Ascending aorta (tissue), 2 donors: ENCODE measurements at regions of chr4 and their contacts with region 1.

Region 1: GRCh38 chr4:184460499-184461285 is 13.7 kb downstream of the IRF2 start:
- DNase-seq: no peak
- H3K4me3 ChIP-seq: no peak overlapping the region
- H3K27ac ChIP-seq: no peak overlapping the region
- H3K4me1 ChIP-seq: peaks cover 0 to 13% of the 10 kb centered on the region in 2 donors
- H3K27me3 ChIP-seq: no peaks in the 10 kb centered on the region
- CTCF ChIP-seq: no peak

Region 2: DNA sequence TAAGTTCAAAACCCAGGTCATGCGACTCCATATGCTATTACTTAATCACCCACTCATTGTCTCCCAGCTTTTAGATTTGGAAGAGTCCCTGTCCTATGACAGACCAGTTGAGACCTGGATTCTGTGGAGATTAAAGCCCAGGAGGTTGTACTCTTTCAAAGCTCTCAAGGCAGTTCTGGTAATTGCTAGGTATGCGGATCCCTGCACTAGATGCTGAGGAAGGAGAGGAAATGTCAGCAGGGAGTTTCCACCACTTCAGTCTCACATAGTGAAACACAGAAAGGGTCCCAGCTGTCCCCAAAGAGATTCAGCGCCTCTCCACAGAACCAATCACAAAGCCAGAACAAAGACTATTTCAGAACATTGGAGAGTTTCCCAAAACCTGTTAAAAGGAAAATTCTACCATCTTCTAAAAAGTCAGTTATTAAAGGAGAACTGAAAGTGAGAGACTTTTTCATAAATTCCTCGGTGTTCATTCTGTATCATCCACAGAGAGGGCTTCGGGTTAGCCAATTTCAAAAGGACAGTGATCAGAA is 39.7 kb before region 1 on chr4:
- intact Hi-C with region 1: loop called (anchors 5 kb)
- DNase-seq: no peak
- H3K4me3 ChIP-seq: no peak overlapping the region
- H3K27ac ChIP-seq: no peak overlapping the region
- H3K4me1 ChIP-seq: no peaks in the 10 kb centered on the region
- H3K27me3 ChIP-seq: no peaks in the 10 kb centered on the region
- CTCF ChIP-seq: no peak

Region 3: GRCh38 chr4:184448821-184449220 is 11.9 kb before region 1 on chr4:
- intact Hi-C with region 1: no loop called
- DNase-seq: no peak
- H3K4me3 ChIP-seq: peak overlapping the region; percentile 21 to 42
- H3K27ac ChIP-seq: peak overlapping the region; percentile 51 to 65
- H3K4me1 ChIP-seq: peaks cover 5 to 43% of the 10 kb centered on the region in 2 donors
- H3K27me3 ChIP-seq: no peaks in the 10 kb centered on the region
- CTCF ChIP-seq: no peak

Region 4: DNA sequence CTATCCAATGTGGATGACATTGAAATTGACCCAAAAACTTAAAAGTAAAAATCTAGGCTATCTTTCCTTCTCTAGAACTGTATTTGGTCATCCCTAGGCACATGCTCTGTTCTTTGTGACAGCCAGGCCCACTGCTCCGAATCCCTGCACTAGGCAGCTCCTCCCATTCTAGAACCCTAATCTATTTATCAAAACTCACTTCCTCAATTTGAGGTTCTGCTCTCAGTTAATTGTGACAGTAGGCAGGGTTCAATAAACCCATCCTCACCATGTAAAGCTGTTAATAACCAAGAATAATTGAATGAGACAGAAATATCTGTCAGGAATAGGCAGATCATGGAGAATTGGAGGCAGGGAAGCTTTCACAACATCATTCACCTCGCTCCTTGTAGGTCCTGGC is 65.5 kb after region 1 on chr4:
- intact Hi-C with region 1: no loop called
- DNase-seq: no peak
- H3K4me3 ChIP-seq: no peak overlapping the region
- H3K27ac ChIP-seq: no peak overlapping the region
- H3K4me1 ChIP-seq: no peaks in the 10 kb centered on the region
- H3K27me3 ChIP-seq: no peaks in the 10 kb centered on the region
- CTCF ChIP-seq: no peak

Region 5: GRCh38 chr4:185020293-185020808 is 559.7 kb after region 1 on chr4:
- intact Hi-C with region 1: no loop called
- DNase-seq: no peak
- H3K4me3 ChIP-seq: peak overlapping the region; percentile 42 to 58
- H3K27ac ChIP-seq: no peak overlapping the region
- H3K4me1 ChIP-seq: peaks cover 3 to 23% of the 10 kb centered on the region in 2 donors
- H3K27me3 ChIP-seq: peaks cover 14% of the 10 kb centered on the region
- CTCF ChIP-seq: no peak